Astrocyte of the spinal cord (primary cell): ENCODE measurements at regions of chr2 and their contacts with region 1.

Region 1: GRCh38 chr2:110853507-110853906 is 121.1 kb downstream of the ACOXL start:
- DNase-seq: peak; percentile 3
- H3K4me3 ChIP-seq: no peak overlapping the region
- CTCF ChIP-seq: peak; percentile 78

Region 2: DNA sequence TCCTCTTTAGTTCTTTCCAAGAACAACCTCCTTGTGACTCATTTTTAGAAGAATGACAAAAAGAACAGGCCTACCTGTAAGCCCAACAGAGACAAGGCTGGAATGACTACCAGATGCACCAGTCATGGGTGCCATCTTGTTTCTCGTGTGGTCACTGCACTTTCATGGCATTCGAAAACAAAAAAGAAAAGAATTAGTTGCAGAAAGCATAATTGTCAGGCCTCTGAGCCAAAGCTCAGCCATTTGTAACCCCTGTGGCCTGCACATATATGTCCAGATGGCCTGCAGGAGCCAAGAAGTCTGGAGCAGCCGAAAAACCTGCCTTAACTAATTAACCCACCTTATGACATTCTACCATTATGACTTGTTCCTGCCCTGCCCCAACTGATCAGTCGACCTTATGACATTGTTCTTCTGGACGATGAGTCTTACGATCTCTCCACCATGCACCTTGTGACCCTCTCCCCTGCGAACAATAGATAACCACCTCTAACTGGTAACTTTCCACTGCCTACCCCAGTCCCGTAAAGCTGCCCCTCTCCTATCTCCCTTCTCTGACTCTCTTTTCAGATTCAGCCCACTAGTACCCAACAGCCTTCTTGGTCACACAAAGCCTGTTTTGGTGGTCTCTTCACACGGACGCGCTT is 161.8 kb before region 1 on chr2:
- in situ Hi-C with region 1: no loop called
- DNase-seq: no peak
- H3K4me3 ChIP-seq: no peak overlapping the region
- CTCF ChIP-seq: no peak

Region 3: GRCh38 chr2:111071600-111072171 is 218.2 kb after region 1 on chr2:
- in situ Hi-C with region 1: loop called (anchors 25 kb)
- DNase-seq: peak; percentile 80
- H3K4me3 ChIP-seq: no peak overlapping the region
- CTCF ChIP-seq: no peak